Right cardiac atrium (tissue), 5 donors: ENCODE measurements at regions of chr2 and their contacts with region 1.

Region 1: DNA sequence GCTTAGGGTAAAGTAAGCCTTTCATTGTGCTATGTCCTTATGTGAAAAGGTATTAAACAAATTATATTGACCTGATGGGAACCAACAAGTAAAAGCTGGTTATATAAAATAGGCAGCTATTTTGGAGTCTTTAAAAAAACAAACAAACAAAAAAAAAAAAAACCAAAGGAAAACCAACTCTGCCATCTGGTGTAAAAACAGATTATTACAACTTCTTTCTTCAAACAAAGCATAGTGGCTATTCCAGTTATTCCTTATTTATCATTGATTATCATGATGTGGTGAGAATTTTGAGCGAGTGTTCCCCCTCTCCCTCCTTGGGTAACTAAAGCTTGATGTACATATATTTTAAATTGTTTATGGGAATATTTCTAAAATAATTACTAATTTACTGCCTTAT is 122.4 kb upstream of the FHL2 start:
- DNase-seq: no peak
- ATAC-seq: no peak
- H3K4me3 ChIP-seq: no peak overlapping the region
- H3K27ac ChIP-seq: no peak overlapping the region
- H3K4me1 ChIP-seq: peaks cover 2% of the 10 kb centered on the region
- H3K27me3 ChIP-seq: no peaks in the 10 kb centered on the region

Region 2: GRCh38 chr2:105224444-105224843 is 296.8 kb before region 1 on chr2:
- intact Hi-C with region 1: no loop called
- DNase-seq: no peak
- ATAC-seq: no peak
- H3K4me3 ChIP-seq: no peak overlapping the region
- H3K27ac ChIP-seq: no peak overlapping the region
- H3K4me1 ChIP-seq: no peaks in the 10 kb centered on the region
- H3K27me3 ChIP-seq: no peaks in the 10 kb centered on the region

Region 3: GRCh38 chr2:105369747-105370690 is 151.2 kb before region 1 on chr2:
- intact Hi-C with region 1: loop called (anchors 2 to 5 kb)
- DNase-seq: peak; percentile 85 to 93 (median 92)
- ATAC-seq: peak; percentile 72 to 79
- H3K4me3 ChIP-seq: no peak overlapping the region
- H3K27ac ChIP-seq: no peak overlapping the region
- H3K4me1 ChIP-seq: peaks cover 2% of the 10 kb centered on the region
- H3K27me3 ChIP-seq: no peaks in the 10 kb centered on the region